ENCODE measurements at regions of chr14 and their contacts with region 1.

Region 1: DNA sequence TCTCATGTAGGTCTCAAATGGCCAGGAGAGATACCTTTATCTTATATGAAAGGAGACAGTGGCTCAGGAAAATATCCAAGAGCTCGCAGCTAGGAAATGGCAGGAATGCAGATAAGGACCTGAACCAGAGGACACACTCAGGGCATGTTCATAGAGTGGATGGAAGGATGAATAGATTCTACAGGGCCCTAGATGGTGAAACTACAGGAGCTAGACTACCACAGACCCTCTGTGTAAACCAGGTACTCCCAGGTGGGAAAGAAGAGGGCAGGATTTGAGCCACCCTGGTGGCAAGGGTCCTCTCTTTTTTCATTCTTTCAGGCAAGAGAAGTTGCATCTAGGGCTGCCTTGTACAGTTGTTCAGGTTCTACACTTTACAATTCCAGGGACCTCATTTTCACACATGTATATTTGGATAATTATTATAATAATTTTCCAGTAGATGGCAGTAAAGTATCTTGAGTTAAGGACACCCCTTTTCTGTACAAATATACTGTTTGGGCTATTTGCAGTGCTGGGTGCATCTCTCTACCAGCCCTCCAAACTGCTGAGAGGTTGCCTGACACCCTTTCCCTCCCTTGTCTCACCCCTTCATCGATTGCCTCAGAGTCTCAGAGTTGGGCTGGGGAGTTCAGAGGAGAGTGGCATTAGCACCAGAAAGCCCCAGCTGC is 10.5 kb upstream of the ZDHHC22 start:
- DNase-seq: no peak
- ATAC-seq: peak; percentile 91
- H3K4me3 ChIP-seq: no peak overlapping the region
- H3K27ac ChIP-seq: no peak overlapping the region
- H3K4me1 ChIP-seq: no peaks in the 10 kb centered on the region
- H3K27me3 ChIP-seq: peaks cover 0 to 2% of the 10 kb centered on the region in 2 experiments; a peak in 2 of 4 replicates
- CTCF ChIP-seq: peak in 2 of 3 experiments; percentile 7 to 41; a peak in 3 of 6 replicates
- EP300 ChIP-seq: no peak
- POLR2A ChIP-seq: no peak
- RAD21 ChIP-seq: peak; percentile 58

Region 2: GRCh38 chr14:77097700-77098528 is 54.1 kb before region 1 on chr14 and contains the start of gene CIPC:
- CTCF ChIA-PET with region 1: interaction called, 16 read pairs
- POLR2A ChIA-PET with region 1: no interaction called
- RAD21 ChIA-PET with region 1: interaction called, 8 read pairs
- SMC1A ChIA-PET with region 1: interaction called, 4 read pairs
- in situ Hi-C with region 1: no loop called
- intact Hi-C with region 1: no loop called
- DNase-seq: peak; percentile 97
- ATAC-seq: peak; percentile 90
- H3K4me3 ChIP-seq: peak within 1 kb of the TSS; percentile 83
- H3K27ac ChIP-seq: peak within 1 kb of the TSS; percentile 87
- H3K4me1 ChIP-seq: peaks cover 17% of the 10 kb centered on the region
- H3K27me3 ChIP-seq: no peaks in the 10 kb centered on the region
- CTCF ChIP-seq: peak in 1 of 3 experiments; percentile 7; a peak in 1 of 6 replicates
- EP300 ChIP-seq: peak in 1 of 2 experiments; percentile 78; a peak in 2 of 4 replicates
- POLR2A ChIP-seq: peak; percentile 86
- RAD21 ChIP-seq: no peak
- polyA plus RNA-seq, gene CIPC: 5.6 to 6.6 TPM

Region 3: GRCh38 chr14:77133720-77134338 is 18.2 kb before region 1 on chr14:
- CTCF ChIA-PET with region 1: interaction called, 30 read pairs
- POLR2A ChIA-PET with region 1: interaction called, 3 read pairs
- RAD21 ChIA-PET with region 1: no interaction called
- SMC1A ChIA-PET with region 1: interaction called, 11 read pairs
- in situ Hi-C with region 1: no loop called
- intact Hi-C with region 1: no loop called
- DNase-seq: no peak
- ATAC-seq: peak; percentile 92
- H3K4me3 ChIP-seq: no peak overlapping the region
- H3K27ac ChIP-seq: no peak overlapping the region
- H3K4me1 ChIP-seq: no peaks in the 10 kb centered on the region
- H3K27me3 ChIP-seq: peaks cover 11 to 13% of the 10 kb centered on the region in 2 experiments
- CTCF ChIP-seq: no peak
- EP300 ChIP-seq: no peak
- POLR2A ChIP-seq: no peak
- RAD21 ChIP-seq: no peak

Region 4: DNA sequence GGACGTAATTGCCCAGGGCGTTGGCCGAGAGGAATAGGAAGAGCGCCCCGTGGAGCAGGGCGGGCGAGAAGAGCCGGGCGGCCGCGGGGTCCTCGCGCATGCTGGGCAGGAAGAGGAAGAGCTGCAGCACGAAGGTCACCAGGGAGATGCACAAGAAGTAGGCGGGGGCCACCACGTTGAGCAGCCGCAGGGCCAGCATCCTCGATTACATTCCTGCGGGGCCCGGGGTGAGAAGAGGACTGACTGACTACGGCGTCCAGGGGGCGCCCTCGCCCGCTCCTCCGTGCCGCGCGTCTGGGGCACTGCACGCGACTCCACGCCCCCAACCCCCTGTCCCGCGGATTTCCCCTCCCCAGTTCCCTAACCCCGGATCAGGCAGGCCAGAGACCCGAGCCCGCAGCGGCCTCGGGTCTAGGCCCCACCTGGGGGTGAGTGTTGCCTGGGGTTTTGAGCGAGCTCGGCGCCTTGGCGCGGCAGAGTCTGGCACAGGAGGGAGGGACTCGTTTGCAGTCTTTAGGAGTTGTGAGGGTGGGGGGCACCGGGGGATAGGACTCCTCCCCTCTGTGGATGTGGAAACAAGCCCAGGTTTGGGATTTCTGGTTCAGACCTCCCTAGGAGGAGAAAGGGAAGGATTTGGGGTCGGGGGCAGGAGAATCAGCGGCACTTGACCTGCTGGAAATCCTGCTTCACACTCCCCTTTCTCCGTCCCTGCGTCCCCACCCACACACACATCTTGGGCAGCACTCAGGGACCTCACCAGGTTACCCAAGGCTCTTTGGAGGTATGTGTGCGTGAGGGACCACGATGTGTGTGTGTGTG is 12.3 kb before region 1 on chr14:
- CTCF ChIA-PET with region 1: interaction called, 37 read pairs
- POLR2A ChIA-PET with region 1: interaction called, 3 read pairs
- RAD21 ChIA-PET with region 1: no interaction called
- SMC1A ChIA-PET with region 1: interaction called, 11 read pairs
- in situ Hi-C with region 1: no loop called
- intact Hi-C with region 1: no loop called
- DNase-seq: no peak
- ATAC-seq: peak; percentile 85
- H3K4me3 ChIP-seq: no peak overlapping the region
- H3K27ac ChIP-seq: no peak overlapping the region
- H3K4me1 ChIP-seq: no peaks in the 10 kb centered on the region
- H3K27me3 ChIP-seq: peaks cover 19 to 21% of the 10 kb centered on the region in 2 experiments
- CTCF ChIP-seq: peak; percentile 35 to 63 (median 44); a peak in 5 of 6 replicates
- EP300 ChIP-seq: no peak
- POLR2A ChIP-seq: no peak
- RAD21 ChIP-seq: peak; percentile 28; the same call in 1 of the 2 replicates

Region 5: GRCh38 chr14:77212943-77213678 is 61.1 kb after region 1 on chr14:
- CTCF ChIA-PET with region 1: interaction called, 73 read pairs
- POLR2A ChIA-PET with region 1: no interaction called
- RAD21 ChIA-PET with region 1: interaction called, 29 read pairs
- SMC1A ChIA-PET with region 1: interaction called, 21 read pairs
- in situ Hi-C with region 1: no loop called
- intact Hi-C with region 1: loop called (anchors 5 kb)
- DNase-seq: no peak
- ATAC-seq: peak; percentile 97
- H3K4me3 ChIP-seq: no peak overlapping the region
- H3K27ac ChIP-seq: no peak overlapping the region
- H3K4me1 ChIP-seq: no peaks in the 10 kb centered on the region
- H3K27me3 ChIP-seq: 0 out of 4 replicates have a peak, but pooled peaks cover 0 to 4% of the 10 kb centered on the region in 2 experiments
- CTCF ChIP-seq: peak; percentile 70 to 89 (median 83)
- EP300 ChIP-seq: no peak
- POLR2A ChIP-seq: no peak
- RAD21 ChIP-seq: peak; percentile 66

Region 6: GRCh38 chr14:77306851-77307765 is 155.1 kb after region 1 on chr14:
- CTCF ChIA-PET with region 1: interaction called, 159 read pairs
- POLR2A ChIA-PET with region 1: no interaction called
- RAD21 ChIA-PET with region 1: interaction called, 8 read pairs
- SMC1A ChIA-PET with region 1: no interaction called
- in situ Hi-C with region 1: no loop called
- intact Hi-C with region 1: no loop called
- DNase-seq: no peak
- ATAC-seq: peak; percentile 40; the same call in 1 of the 3 replicates
- H3K4me3 ChIP-seq: no peak overlapping the region
- H3K27ac ChIP-seq: no peak overlapping the region
- H3K4me1 ChIP-seq: no peaks in the 10 kb centered on the region
- H3K27me3 ChIP-seq: no peaks in the 10 kb centered on the region
- CTCF ChIP-seq: no peak
- EP300 ChIP-seq: no peak
- POLR2A ChIP-seq: no peak
- RAD21 ChIP-seq: no peak

Region 7: GRCh38 chr14:77542421-77543239 is 390.6 kb after region 1 on chr14:
- CTCF ChIA-PET with region 1: no interaction called
- POLR2A ChIA-PET with region 1: no interaction called
- RAD21 ChIA-PET with region 1: no interaction called
- SMC1A ChIA-PET with region 1: interaction called, 4 read pairs
- in situ Hi-C with region 1: no loop called
- intact Hi-C with region 1: loop called (anchors 10 kb)
- DNase-seq: no peak
- ATAC-seq: peak; percentile 66
- H3K4me3 ChIP-seq: peak overlapping the region; percentile 10; the same call in 1 of the 2 replicates
- H3K27ac ChIP-seq: peak overlapping the region; percentile 73
- H3K4me1 ChIP-seq: peaks cover 19% of the 10 kb centered on the region
- H3K27me3 ChIP-seq: no peaks in the 10 kb centered on the region
- CTCF ChIP-seq: no peak
- EP300 ChIP-seq: no peak
- POLR2A ChIP-seq: no peak
- RAD21 ChIP-seq: no peak